K562 (cell line): ENCODE measurements at regions of chr11 and their contacts with region 1.

Region 1: DNA sequence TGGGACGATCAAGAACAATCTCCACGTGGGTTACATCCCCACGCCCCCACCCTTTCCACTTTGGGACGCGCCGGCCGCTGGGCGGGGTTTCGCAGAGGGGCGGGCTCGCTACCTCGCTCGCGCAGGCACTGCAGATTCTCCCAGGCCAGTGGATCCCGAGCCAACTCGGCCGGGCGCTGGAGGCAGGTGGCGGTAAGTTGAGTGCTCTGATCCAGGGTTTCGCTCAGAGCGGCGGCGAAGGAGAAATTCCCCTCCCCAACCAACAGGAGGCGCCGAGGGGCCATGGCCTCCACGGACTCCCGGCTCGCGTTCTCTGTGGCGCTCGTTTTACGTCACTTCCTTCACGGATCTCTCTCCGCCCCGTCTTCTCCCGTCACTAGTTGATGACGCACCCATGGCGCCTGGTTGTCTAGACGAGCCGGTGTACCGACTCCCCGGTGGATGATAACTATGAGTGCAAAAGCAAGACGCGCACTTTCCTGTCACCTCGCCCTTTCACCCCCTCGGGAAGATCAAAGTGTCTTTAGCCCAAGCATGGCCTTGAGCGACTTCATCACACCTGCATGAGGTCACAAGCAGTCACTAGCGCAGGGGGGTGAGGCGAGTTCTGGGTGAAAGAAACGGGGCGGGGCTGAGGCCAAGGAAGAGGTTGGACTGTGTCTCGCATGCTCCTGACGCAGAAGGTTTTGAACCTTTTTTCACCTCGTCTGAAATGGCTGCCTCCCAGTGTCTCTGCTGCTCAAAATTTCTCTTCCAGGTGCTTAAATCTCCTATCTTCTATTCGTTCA is at the starts of genes CFAP68 and FDXACB1:
- DNase-seq: peak; percentile 92 to 98 (median 93)
- ATAC-seq: peak; percentile 91
- H3K4me3 ChIP-seq: peak within 1 kb of the TSS; percentile 62
- H3K27ac ChIP-seq: peak within 1 kb of the TSS; percentile 95
- H3K4me1 ChIP-seq: peaks cover 10 to 21% of the 10 kb centered on the region in 2 experiments; a peak in 4 of 5 replicates
- H3K27me3 ChIP-seq: no peaks in the 10 kb centered on the region
- CTCF ChIP-seq: peak; percentile 95 to 98 (median 98)
- EP300 ChIP-seq: no peak; the same call in 1 of the 2 replicates
- POLR2A ChIP-seq: peak; percentile 88
- RAD21 ChIP-seq: peak; percentile 85 to 89
- polyA plus RNA-seq, gene CFAP68: 71.6 to 71.7 TPM
- polyA plus RNA-seq, gene FDXACB1: 7.4 to 7.5 TPM

Region 2: GRCh38 chr11:111623527-111624030 is 255.5 kb before region 1 on chr11:
- CTCF ChIA-PET with region 1: no interaction called
- POLR2A ChIA-PET with region 1: no interaction called
- in situ Hi-C with region 1: no loop called
- intact Hi-C with region 1: no loop called
- DNase-seq: peak in 1 of 4 experiments; percentile 45
- ATAC-seq: peak; percentile 64
- H3K4me3 ChIP-seq: no peak overlapping the region
- H3K27ac ChIP-seq: no peak overlapping the region
- H3K4me1 ChIP-seq: peaks cover 0 to 3% of the 10 kb centered on the region in 2 experiments; a peak in 1 of 5 replicates
- H3K27me3 ChIP-seq: no peaks in the 10 kb centered on the region
- CTCF ChIP-seq: no peak
- EP300 ChIP-seq: no peak
- POLR2A ChIP-seq: no peak
- RAD21 ChIP-seq: no peak

Region 3: DNA sequence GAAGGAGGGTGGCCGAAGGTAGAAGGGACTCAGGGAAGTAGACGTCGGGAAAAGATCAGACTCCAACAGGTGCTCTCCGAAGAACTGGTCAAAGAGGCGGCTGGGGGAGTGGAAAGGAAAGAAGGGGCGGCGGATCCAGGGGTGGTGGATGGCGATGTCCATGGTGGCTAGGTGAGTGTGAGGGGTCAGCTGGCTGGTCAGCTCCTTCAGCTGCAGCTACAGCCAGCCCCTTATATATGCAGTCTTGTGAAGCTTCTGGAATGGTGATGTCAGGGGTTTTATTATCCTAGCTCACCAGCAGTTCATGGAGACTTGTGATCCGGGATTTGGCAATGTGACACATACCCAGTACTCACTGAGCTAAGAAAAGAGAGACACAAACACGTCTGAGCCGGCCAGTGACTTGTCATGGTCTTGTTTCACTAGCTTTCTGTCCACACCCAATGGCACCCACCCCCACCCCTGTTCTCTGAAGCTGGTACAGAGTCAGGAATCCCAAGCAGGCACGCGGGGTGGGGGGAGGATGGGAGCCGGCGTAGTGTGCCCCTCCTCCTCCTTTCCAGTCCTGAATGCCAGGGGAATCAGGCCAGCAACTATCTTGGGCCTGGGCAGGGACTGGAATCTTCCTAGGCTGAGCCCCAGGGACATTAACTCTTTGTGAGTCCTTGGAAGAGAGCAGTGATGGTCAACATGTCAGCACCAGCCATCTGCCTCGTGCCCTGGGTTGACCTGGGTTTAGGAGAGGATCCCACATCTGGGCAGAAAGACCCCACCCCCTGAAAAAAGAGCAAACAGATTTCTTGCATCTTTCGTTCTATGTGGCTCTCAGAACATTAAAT is 32.7 kb after region 1 on chr11 and contains the start of gene CRYAB:
- CTCF ChIA-PET with region 1: no interaction called
- POLR2A ChIA-PET with region 1: interaction called, 3 read pairs
- in situ Hi-C with region 1: no loop called
- intact Hi-C with region 1: loop called (anchors 5 kb)
- DNase-seq: peak; percentile 33 to 66 (median 36)
- ATAC-seq: peak; percentile 48
- H3K4me3 ChIP-seq: no peak within 1 kb of the TSS
- H3K27ac ChIP-seq: peak within 1 kb of the TSS; percentile 57
- H3K4me1 ChIP-seq: peaks cover 35 to 40% of the 10 kb centered on the region in 2 experiments; a peak in 4 of 5 replicates
- H3K27me3 ChIP-seq: no peaks in the 10 kb centered on the region
- CTCF ChIP-seq: no peak
- EP300 ChIP-seq: no peak
- POLR2A ChIP-seq: no peak
- RAD21 ChIP-seq: no peak
- polyA plus RNA-seq, gene CRYAB: 6.5 to 7.5 TPM

Region 4: GRCh38 chr11:111982019-111982464 is 103.0 kb after region 1 on chr11:
- CTCF ChIA-PET with region 1: interaction called, 26 read pairs
- POLR2A ChIA-PET with region 1: interaction called, 3 read pairs
- in situ Hi-C with region 1: loop called (anchors 5 kb)
- intact Hi-C with region 1: loop called (anchors 1 kb)
- DNase-seq: peak; percentile 57 to 84 (median 65)
- ATAC-seq: peak; percentile 95
- H3K4me3 ChIP-seq: no peak overlapping the region
- H3K27ac ChIP-seq: peak overlapping the region; percentile 62; the same call in 1 of the 3 replicates
- H3K4me1 ChIP-seq: peaks cover 8 to 28% of the 10 kb centered on the region in 2 experiments
- H3K27me3 ChIP-seq: no peaks in the 10 kb centered on the region
- CTCF ChIP-seq: peak; percentile 83 to 91 (median 85)
- EP300 ChIP-seq: no peak
- POLR2A ChIP-seq: no peak
- RAD21 ChIP-seq: peak; percentile 78 to 86

Region 5: GRCh38 chr11:112024773-112025678 is 146.0 kb after region 1 on chr11 and contains the start of gene DLAT:
- CTCF ChIA-PET with region 1: no interaction called
- POLR2A ChIA-PET with region 1: interaction called, 3 read pairs
- in situ Hi-C with region 1: no loop called
- intact Hi-C with region 1: loop called (anchors 1 kb)
- DNase-seq: peak; percentile 86 to 95 (median 87)
- ATAC-seq: peak; percentile 90
- H3K4me3 ChIP-seq: peak within 1 kb of the TSS; percentile 89
- H3K27ac ChIP-seq: peak within 1 kb of the TSS; percentile 87
- H3K4me1 ChIP-seq: peaks cover 6 to 13% of the 10 kb centered on the region in 2 experiments; a peak in 3 of 5 replicates
- H3K27me3 ChIP-seq: no peaks in the 10 kb centered on the region
- CTCF ChIP-seq: no peak
- EP300 ChIP-seq: no peak; the same call in 1 of the 2 replicates
- POLR2A ChIP-seq: peak; percentile 97
- RAD21 ChIP-seq: 0 out of 4 replicates have a peak, but pooled peaks of 1 of the 2 experiments have one; percentile 13
- polyA plus RNA-seq, gene DLAT: 41.7 to 47.6 TPM

Region 6: DNA sequence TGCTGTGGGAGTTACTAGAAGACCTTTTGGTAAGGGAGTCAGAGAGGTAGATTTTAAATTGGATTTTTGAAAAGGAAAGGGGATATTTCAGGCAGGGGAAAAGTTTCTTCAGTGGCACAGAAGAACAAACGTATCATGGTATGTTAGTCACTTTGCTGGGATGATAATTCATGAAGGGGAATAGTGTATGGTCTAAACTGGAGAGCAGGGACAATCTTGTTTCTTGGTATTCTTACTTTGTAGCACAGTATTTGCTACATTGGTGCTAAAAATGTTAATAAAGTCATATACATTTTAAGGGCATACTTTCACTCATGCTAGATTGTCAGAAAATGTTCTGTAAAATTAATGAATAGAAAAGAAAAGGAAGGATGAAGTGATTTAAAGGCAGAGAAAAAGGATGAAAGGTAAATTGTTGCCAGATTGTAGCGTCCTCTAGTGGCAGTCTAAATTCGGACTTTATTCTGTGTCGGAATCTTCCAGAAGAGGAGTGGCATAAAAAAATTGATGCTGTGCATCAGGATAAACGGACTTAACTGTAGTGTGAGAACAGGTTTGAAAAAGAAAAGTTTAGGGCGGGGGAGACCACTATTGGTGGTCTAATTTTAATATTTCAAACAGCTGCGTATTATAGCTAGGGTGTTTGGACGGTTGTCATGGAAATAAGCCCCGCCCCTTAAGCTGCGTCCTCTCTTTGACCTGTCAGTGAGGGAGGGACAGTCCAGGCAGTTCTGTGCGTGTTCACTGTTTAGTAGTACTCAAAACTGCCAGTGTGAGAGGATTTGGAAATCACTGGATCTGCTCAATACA is 296.0 kb after region 1 on chr11 and contains the start of gene BCO2:
- CTCF ChIA-PET with region 1: no interaction called
- POLR2A ChIA-PET with region 1: no interaction called
- in situ Hi-C with region 1: no loop called
- intact Hi-C with region 1: loop called (anchors 2 kb)
- DNase-seq: peak; percentile 57 to 82 (median 70)
- ATAC-seq: peak; percentile 96
- H3K4me3 ChIP-seq: no peak within 1 kb of the TSS
- H3K27ac ChIP-seq: no peak within 1 kb of the TSS
- H3K4me1 ChIP-seq: peaks cover 0 to 8% of the 10 kb centered on the region in 2 experiments; a peak in 2 of 5 replicates
- H3K27me3 ChIP-seq: peaks cover 0 to 8% of the 10 kb centered on the region in 2 experiments; a peak in 2 of 5 replicates
- CTCF ChIP-seq: peak; percentile 69 to 92 (median 85)
- EP300 ChIP-seq: no peak
- POLR2A ChIP-seq: no peak
- RAD21 ChIP-seq: peak; percentile 55 to 81
- polyA plus RNA-seq, gene BCO2: 0.21 to 0.24 TPM